BJ (cell line): ENCODE measurements at regions of chr17 and their contacts with region 1.

Region 1: DNA sequence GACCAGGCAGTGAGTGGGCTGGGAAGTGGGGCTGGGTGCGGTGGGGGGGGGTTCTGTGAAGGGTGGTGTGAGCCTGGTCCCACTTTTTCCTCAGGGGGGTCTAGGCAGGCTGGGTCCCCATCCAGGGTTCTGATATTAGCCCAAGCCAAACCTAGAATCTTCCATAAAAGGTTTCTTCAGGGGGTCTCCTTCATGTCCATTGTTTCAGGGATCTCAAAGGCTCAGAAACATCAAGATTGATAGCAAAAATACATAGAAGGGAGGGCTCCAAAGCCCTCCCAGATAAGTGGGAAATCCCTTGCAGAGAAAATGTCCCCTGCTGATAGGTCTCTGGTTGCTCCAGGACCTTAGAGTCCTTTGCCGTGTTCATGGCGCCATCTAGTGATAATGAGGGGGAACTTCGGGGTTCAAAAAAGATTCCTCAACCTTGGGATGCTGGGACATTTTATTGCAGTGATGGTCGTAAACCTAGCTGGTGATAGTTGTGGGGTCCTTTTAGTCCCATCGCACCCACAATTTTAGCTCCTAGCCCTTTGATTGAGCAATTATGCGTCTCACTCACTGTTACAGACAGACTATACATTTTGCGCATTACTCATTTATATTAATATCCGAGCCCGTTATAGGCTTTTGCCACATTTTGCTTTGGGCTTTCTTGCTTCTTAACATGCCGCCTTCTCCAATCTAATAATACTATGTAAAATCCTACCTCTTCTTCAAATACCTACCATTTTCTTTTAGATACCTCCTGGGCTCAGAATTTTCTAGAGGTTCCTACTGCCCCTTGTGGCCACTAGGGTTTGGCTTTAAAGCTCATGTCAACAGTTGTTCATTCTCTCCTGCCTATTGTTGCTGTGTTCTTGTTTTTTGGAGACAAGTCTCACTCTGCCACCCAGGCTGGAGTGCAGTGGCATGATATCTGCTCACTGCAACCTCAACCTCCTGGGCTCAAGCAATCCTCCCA is 35.1 kb downstream of the IGF2BP1 start:
- DNase-seq: no peak
- H3K4me3 ChIP-seq: no peak overlapping the region
- H3K27me3 ChIP-seq: no peaks in the 10 kb centered on the region
- CTCF ChIP-seq: peak; percentile 79

Region 2: GRCh38 chr17:48878918-48879898 is 153.0 kb before region 1 on chr17:
- CTCF ChIA-PET with region 1: interaction called, 15 read pairs
- POLR2A ChIA-PET with region 1: no interaction called
- DNase-seq: no peak
- H3K4me3 ChIP-seq: no peak overlapping the region
- H3K27me3 ChIP-seq: no peaks in the 10 kb centered on the region
- CTCF ChIP-seq: peak; percentile 95

Region 3: DNA sequence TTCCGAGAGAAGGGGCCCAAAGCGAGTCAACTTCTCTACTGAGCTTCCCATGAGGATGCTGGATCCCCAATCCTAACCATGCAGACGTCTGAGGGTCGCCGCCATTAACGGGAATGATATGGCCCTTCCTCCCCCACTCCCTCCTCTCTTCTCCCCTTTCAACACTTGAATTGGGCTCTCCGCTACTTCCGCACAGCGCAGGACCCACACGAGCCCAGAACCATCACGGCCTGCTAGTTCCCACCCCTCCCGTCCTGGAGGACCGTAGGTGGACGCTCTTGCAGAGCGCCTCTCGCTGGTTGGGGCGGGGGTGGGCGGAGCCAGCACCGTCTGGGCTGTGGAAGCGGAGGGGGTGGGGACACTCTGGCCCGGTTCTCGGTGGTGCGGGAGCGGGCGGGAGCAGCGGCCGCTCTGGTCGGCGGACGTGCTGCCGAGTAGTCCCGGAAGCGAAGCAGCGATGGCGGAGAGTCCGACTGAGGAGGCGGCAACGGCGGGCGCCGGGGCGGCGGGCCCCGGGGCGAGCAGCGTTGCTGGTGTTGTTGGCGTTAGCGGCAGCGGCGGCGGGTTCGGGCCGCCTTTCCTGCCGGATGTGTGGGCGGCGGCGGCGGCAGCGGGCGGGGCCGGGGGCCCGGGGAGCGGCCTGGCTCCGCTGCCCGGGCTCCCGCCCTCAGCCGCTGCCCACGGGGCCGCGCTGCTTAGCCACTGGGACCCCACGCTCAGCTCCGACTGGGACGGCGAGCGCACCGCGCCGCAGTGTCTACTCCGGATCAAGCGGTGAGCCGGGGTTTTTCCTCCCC is 124.0 kb before region 1 on chr17 and contains the start of gene UBE2Z:
- CTCF ChIA-PET with region 1: interaction called, 12 read pairs
- POLR2A ChIA-PET with region 1: no interaction called
- DNase-seq: peak; percentile 66
- H3K4me3 ChIP-seq: peak within 1 kb of the TSS; percentile 94
- H3K27me3 ChIP-seq: no peaks in the 10 kb centered on the region
- CTCF ChIP-seq: no peak
- polyA plus RNA-seq, gene UBE2Z: 166 and 190 TPM in 2 replicates

Region 4: DNA sequence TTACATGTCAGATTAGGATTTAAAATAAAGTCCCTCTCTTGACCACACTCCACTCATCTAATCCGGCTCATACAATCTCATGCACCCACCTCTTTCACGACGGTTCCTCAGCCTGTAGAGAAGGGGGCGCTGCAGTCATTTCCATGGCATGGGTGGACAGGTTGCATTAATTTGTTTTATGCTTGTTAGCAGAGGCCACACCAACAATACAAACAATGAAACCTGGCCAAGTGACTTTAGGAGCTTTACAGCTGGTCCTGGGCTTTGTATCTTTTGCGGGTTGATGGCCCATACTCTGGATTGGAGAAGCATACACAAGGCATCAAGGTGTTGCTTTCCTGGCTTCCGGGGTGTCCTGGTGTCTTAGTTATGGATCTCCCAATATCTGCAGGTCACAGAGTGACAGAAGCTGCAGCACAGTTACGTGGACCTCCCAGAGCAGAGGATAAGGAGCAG is 77.9 kb before region 1 on chr17:
- CTCF ChIA-PET with region 1: interaction called, 93 read pairs
- POLR2A ChIA-PET with region 1: no interaction called
- DNase-seq: no peak
- H3K4me3 ChIP-seq: no peak overlapping the region
- H3K27me3 ChIP-seq: no peaks in the 10 kb centered on the region
- CTCF ChIP-seq: peak; percentile 64

Region 5: DNA sequence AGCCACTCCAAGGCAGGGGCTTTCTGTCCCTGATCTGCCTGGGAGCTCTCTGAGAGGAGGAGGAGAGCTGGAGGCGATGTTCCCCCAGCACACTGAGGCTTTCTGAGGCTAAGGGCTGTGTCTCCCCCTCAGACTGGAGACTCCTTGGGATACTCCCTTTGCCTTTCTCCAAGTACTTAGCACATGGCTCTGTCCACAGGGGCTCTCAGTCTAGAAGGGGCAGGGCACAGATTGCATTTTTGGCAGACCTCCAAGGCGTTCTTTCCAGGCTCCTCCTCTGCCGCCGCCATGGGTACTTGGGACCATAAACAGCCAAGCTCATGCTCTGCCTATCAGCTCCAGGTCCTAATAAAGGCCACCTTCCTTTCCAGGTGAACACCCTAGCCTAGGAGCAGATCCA is 62.0 kb before region 1 on chr17:
- CTCF ChIA-PET with region 1: interaction called, 16 read pairs
- POLR2A ChIA-PET with region 1: no interaction called
- DNase-seq: no peak
- H3K4me3 ChIP-seq: no peak overlapping the region
- H3K27me3 ChIP-seq: no peaks in the 10 kb centered on the region
- CTCF ChIP-seq: no peak

Region 6: GRCh38 chr17:49003623-49004511 is 28.4 kb before region 1 on chr17:
- CTCF ChIA-PET with region 1: interaction called, 30 read pairs
- POLR2A ChIA-PET with region 1: no interaction called
- DNase-seq: no peak
- H3K4me3 ChIP-seq: peak overlapping the region; percentile 41
- H3K27me3 ChIP-seq: peaks cover 13% of the 10 kb centered on the region
- CTCF ChIP-seq: no peak

Region 7: DNA sequence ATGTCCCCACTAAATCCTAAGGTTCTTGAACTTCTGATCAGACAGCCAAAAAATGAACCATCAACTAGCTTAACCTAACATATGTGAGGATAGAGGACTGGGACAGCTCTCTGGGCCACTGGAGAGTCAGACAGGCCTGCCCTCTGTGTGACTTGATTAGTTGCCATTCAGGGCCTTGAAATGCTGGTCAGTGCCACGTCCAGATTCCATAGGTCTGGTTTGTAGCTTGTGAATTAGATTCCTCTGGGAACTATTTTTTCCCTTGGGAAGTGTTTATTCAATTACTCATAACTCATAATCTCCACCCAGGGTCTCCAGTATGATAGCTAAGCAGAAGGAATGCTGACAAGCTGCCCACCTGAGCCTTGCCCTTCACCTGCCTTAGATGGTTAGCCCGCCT is 13.1 kb after region 1 on chr17:
- CTCF ChIA-PET with region 1: interaction called, 41 read pairs
- POLR2A ChIA-PET with region 1: no interaction called
- DNase-seq: no peak
- H3K4me3 ChIP-seq: no peak overlapping the region
- H3K27me3 ChIP-seq: no peaks in the 10 kb centered on the region
- CTCF ChIP-seq: no peak

Region 8: DNA sequence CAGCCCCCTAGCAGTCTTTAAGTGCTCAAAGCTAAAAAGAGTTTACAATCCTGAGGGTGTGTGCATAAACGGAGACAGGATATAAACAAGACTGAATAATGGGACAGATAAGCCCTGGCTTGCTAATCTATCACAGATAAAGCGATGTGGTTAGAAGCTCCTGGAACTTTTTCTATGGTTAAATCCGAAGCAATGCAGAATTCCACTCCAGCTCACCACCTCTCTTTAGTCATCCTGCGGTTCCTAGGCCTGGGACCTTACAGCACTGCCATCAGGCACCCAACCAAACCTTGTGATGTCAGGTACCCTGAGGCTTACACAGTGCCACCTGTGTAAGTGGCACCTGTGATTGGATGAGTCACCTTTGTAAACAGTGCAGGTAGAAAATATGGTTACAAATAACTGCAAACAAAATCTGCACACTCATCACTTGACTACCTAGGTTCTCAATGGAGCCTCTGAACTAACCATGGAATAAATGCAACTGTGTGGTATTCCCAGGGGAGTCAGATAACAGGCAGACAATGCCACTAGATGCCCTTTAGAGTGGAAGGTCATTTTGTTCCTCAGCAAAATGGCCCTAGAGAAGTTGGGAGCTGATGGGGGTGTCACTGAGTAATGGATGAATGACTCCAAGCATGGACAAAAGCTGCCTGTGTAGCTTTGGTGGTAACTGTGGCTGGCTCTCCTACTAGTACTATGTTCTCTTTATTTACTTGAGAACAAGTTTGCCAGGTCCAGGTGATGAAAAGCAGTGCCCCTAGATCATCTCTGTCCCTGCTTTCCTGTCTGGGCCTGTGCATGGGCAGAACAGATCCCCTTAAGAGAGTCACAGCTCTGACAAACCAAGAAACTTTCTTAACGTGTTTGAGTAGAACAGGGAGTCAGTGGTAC is 69.1 kb after region 1 on chr17:
- CTCF ChIA-PET with region 1: no interaction called
- POLR2A ChIA-PET with region 1: no interaction called
- DNase-seq: no peak
- H3K4me3 ChIP-seq: no peak overlapping the region
- H3K27me3 ChIP-seq: no peaks in the 10 kb centered on the region
- CTCF ChIP-seq: no peak